HEK293T (cell line): ENCODE measurements at regions of chr16 and their contacts with region 1.

Region 1: GRCh38 chr16:30052671-30053372 is 12.7 kb upstream of the ALDOA start:
- DNase-seq: peak; percentile 99

Region 2: DNA sequence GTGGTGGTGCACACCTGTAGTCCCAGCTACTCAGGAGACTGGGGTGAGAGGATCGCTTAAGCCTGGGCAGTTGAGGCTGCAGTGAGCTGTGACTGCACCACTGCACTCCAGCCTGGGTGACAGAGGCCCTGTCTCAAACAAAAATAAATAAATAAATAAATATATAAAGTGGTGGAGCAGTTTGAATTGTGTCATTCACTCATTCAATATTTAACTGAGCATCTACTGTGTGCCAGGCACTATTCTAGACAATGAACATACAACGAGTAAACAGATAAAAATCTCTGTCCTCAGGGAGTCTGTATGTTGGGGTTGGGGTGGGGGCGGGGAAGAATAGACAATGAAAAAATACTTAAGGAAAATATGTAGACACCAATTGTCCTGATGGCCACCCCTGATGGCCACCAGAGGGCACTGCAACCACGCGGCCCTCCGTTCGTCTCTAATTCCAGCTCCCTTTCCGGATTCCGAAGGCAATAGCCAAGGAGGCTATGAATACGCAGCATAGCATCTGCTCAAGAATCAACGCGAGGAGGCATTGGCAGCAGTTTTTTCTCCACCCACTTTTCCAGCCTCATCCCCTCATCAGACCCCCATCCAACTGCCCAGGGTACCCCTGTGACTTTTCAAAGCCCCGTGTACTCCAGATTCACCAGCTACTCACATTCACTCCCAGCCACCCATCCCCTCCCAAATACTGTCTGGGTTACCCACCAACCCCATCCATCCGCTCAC is 352.4 kb before region 1 on chr16:
- CTCF ChIA-PET with region 1: interaction called, 10 read pairs
- POLR2A ChIA-PET with region 1: no interaction called
- DNase-seq: peak; percentile 87

Region 3: GRCh38 chr16:29820271-29820701 is 232.5 kb before region 1 on chr16 and contains the start of gene MVP:
- CTCF ChIA-PET with region 1: no interaction called
- POLR2A ChIA-PET with region 1: no interaction called
- DNase-seq: no peak

Region 4: DNA sequence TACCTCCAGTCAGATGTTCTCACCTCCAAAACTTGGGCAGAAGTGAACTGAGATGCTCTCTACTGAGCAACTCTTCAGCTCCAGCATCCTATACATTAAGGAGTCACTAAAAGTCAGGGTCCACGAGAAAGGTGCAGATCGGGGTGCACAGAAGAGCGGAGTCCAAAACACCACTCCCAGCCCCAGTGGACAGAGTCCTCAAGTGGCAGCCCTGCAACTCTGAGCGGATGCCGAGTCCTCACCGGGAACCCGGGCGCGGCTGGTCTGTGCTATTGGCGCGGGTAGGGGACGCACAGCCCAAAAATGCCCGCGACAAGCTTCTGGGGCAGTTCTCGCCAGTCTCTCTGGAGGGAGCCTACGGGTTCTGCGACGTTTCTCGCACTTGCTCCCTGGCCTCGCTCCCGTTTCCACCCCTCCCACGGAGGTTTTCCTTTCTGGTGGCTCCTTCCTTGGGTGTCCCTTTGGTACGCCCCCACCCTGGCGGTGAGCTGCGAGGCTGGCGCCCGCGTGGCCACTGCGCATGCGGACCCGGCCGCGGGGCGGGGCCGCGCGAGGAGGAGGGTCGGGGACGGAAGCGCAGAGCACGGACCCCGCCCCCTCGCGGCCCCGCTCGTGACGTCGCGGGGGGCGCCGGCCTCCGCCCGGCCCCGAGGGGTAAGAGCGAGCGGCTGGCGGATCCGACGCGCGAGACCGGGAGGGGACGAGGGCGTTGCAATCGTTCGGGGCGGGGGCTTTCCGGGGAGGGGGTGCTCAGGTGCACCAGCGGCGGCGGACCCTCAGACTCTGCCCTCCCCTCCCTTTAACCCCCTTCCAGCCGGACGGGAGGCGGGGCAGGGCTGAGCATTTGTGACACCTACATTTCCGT is 91.1 kb before region 1 on chr16 and contains the start of gene TMEM219:
- CTCF ChIA-PET with region 1: no interaction called
- POLR2A ChIA-PET with region 1: no interaction called
- DNase-seq: peak; percentile 100

Region 5: DNA sequence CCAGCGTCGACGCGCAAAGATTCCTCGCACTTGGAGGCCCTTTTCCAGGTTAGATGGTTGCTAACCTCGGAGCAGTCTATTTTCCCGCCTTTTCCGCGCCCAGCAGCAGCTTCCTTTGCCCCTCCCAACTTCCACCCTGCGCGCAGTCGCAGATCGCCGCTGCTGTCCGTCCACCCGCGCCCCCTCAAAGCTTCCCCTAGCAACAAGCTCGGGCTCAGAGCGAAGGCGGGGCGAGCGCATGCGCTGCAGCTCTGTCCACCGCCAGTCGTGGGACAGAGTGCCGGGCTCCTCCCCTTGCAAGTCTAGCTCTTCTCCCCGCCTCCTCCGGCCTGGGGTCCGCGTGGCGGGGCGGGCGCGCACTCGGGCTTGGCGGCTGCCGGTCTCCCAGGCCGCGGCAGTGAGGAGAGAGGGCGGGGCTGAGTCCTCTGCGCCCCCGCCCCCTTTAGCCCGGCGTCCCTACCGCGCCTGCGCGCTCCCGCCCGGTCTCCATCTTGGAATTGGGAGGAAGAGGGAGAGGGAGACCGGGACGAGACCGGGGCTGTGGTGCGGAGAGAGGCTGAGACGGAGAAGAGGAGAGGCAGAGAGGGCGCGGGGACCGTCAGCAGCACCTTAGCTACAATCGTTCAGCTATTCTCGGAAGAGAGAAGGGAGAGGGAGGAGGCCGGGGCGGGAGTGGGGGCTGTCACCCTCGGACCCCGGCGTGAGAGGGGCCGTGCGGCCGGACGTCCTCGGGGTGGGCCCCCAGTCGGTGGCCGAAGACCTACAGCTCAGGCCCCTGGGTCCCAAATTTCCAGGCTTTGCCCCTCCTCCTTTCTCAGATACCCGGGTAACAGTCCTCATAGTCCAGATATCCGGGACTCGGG is 79.2 kb before region 1 on chr16 and contains the start of gene TAOK2:
- CTCF ChIA-PET with region 1: no interaction called
- POLR2A ChIA-PET with region 1: no interaction called
- DNase-seq: peak; percentile 100

Region 6: DNA sequence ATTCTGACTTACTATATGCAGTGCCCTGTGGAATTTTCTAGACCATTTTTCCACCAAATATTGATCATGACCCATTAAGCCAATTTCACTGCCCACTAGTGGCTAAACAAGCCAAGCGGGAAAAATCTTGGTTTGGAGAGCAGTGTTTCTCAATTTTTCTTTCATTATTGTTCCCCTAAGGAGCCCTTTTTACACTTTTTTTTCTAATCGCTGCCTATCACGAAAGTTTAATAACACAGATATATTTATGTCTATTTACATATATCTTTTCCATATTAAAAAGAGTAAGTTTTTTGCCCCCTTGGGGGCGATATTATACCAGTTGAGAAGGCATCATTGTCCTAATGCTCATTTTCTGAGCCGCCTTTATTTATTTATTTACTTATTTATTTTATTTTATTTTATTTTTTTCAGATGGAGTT is 11.0 kb before region 1 on chr16:
- CTCF ChIA-PET with region 1: interaction called, 6 read pairs
- POLR2A ChIA-PET with region 1: interaction called, 12 read pairs
- DNase-seq: no peak

Region 7: DNA sequence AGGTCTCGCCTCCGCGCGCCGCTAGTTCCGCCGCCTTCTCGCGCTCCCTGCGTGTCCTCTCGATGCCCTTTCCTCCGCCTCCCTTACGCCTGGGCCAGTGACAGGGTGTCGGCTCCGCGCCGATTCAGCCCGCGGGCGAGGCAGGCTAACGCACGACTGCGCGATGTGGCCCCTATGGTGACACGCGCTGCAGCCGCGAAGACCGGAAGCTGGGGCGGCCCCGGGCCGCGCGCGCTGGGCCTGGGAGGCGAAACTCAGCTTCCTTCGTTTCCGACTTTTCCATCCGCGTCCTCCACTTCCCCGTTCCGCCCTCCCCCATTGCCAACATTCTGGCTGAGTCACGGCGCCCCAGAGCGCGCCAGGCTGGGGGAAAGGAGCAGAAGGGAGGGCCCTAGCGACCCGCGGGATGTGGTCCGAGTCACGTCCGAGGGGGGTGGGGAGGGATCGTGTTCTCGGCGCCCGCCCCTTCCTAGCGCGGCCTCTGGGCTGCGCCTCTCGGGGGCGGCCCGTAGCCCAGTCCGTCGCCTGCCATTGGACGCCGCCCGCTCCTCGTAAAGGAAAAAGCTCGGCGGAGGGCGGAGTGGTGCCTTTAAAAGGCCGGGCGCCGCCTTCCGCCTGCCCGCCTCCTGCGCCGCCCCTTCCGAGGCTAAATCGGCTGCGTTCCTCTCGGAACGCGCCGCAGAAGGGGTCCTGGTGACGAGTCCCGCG is 12.5 kb after region 1 on chr16 and contains the start of gene ALDOA:
- CTCF ChIA-PET with region 1: interaction called, 20 read pairs
- POLR2A ChIA-PET with region 1: interaction called, 115 read pairs
- DNase-seq: peak; percentile 98

Region 8: DNA sequence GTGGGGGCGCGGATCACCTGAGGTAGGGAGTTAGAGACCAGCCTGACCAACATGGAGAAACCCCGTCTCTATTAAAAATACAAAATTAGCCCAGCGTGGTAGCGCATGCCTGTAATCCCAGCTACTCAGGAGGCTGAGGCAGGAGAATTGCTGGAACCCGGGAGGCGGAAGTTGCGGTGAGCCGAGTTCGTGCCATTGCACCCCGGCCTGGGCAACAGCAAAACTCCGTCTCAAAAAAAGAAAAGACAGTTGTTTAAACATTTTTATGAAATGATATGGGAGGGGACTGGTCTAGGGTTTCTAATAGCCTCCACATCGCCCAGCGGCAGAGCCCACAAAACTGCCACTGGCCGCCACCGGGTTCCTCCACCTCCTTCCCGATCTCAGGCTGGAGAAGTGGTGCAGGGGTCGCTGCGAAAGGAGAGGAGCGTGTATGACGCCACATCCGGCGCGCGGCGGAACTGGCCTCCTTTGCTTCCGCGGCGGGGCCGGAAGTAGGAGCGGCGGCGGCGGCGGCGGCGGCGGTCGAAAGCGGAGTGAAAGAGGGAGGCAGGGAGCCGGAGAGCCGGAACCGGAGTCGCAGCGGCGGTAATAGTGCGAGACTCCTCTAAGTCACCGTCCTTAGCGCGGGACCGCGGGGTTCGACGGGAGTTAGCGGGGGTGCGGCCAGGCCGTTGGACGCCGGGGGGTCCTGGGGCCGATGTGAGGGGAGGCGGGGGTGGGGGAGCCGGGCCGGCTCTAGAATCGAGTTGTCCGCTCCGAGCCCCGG is 22.9 kb after region 1 on chr16 and contains the start of gene PPP4C:
- CTCF ChIA-PET with region 1: interaction called, 7 read pairs
- POLR2A ChIA-PET with region 1: interaction called, 12 read pairs
- DNase-seq: peak; percentile 99

Region 9: DNA sequence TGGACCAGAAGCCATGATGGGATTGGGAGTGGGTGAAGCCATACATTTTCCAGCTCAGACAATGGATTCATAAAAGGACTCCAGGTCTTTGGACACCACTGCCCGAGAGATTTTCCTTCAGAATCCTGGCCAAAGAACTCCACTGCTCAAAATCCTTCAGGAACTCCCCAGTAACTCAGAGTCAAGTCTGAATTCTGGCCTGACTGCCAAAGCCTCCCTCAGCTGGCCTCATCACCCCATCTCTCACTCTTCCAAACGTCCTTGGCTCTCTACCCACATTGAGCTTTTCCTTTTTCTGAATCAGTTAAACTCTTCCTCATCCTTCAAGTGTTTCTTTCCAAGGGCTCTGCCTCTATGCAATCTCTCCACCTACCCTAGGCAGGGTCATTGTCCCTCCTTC is 330.7 kb after region 1 on chr16:
- CTCF ChIA-PET with region 1: no interaction called
- POLR2A ChIA-PET with region 1: no interaction called
- DNase-seq: no peak